ENCODE measurements at regions of chr2 and their contacts with region 1.

Region 1: GRCh38 chr2:164910101-164910899 is 45.0 kb downstream of the SLC38A11 start:
- DNase-seq: no peak
- ATAC-seq: peak; percentile 71
- H3K4me3 Mint-ChIP-seq: peak overlapping the region; percentile 32
- H3K27ac Mint-ChIP-seq: peak overlapping the region; percentile 68
- H3K4me1 Mint-ChIP-seq: peaks cover 39% of the 10 kb centered on the region
- H3K27me3 Mint-ChIP-seq: no peaks in the 10 kb centered on the region
- CTCF ChIP-seq: no peak

Region 2: DNA sequence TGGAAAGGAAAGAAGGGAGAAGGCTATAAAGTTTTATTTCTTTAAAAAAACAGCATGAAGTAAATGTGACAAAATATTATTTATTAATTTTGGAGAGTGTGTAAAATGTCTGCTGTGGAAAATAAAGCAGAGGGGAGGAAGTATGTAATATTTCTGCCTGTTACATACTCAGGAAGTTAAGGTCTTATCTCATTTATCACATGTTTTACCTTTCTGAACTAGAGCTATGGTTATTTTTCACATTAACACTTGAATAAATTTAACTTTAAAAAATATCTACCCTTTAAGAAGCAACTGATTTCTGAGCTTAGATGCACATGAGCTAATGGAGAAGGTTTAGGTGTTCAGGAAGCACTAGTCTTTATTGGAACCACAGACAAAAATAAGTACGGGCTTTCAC is 437.3 kb before region 1 on chr2:
- CTCF ChIA-PET with region 1: no interaction called
- POLR2A ChIA-PET with region 1: no interaction called
- intact Hi-C with region 1: no loop called
- DNase-seq: no peak
- ATAC-seq: no peak
- H3K4me3 Mint-ChIP-seq: no peak overlapping the region
- H3K27ac Mint-ChIP-seq: no peak overlapping the region
- H3K4me1 Mint-ChIP-seq: no peaks in the 10 kb centered on the region
- H3K27me3 Mint-ChIP-seq: no peaks in the 10 kb centered on the region
- CTCF ChIP-seq: no peak

Region 3: DNA sequence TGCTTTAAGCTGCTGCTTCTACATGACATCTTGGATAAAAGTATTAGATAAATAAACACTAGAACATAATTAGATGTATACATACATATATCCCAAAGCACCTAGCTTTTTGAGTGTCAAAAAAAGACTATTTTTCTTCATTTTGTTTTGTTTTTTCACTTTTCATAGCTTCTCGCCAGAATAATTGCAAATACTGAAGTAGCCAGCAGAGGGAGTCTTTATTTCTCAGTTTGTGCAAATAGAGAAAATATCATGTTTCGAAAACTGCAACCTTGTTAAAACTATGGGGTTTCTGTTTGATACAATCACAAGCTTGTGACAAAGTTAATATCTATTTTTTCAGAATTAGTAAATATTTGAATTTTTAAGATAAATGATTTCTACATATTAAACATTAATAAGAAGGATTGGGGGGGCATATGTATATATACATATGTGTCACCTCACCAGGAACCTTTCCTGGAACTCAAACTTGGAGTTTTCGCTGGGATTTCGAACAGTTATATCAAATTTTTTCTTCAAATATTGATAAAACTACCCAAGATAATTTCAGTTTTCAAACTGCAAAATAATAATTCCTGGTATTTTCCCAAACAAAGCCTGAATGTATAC is 350.0 kb before region 1 on chr2:
- CTCF ChIA-PET with region 1: no interaction called
- POLR2A ChIA-PET with region 1: no interaction called
- intact Hi-C with region 1: loop called (anchors 5 kb)
- DNase-seq: no peak
- ATAC-seq: no peak
- H3K4me3 Mint-ChIP-seq: no peak overlapping the region
- H3K27ac Mint-ChIP-seq: no peak overlapping the region
- H3K4me1 Mint-ChIP-seq: peaks cover 6% of the 10 kb centered on the region
- H3K27me3 Mint-ChIP-seq: no peaks in the 10 kb centered on the region
- CTCF ChIP-seq: peak; percentile 81

Region 4: GRCh38 chr2:164697674-164698461 is 212.4 kb before region 1 on chr2:
- CTCF ChIA-PET with region 1: no interaction called
- POLR2A ChIA-PET with region 1: no interaction called
- intact Hi-C with region 1: loop called (anchors 1 kb)
- DNase-seq: no peak
- ATAC-seq: peak; percentile 50
- H3K4me3 Mint-ChIP-seq: no peak overlapping the region
- H3K27ac Mint-ChIP-seq: no peak overlapping the region
- H3K4me1 Mint-ChIP-seq: no peaks in the 10 kb centered on the region
- H3K27me3 Mint-ChIP-seq: no peaks in the 10 kb centered on the region
- CTCF ChIP-seq: no peak

Region 5: GRCh38 chr2:164868563-164869419 is 41.5 kb before region 1 on chr2:
- CTCF ChIA-PET with region 1: no interaction called
- POLR2A ChIA-PET with region 1: no interaction called
- intact Hi-C with region 1: loop called (anchors 2 kb)
- DNase-seq: no peak
- ATAC-seq: no peak
- H3K4me3 Mint-ChIP-seq: no peak overlapping the region
- H3K27ac Mint-ChIP-seq: peak overlapping the region; percentile 32
- H3K4me1 Mint-ChIP-seq: peaks cover 41% of the 10 kb centered on the region
- H3K27me3 Mint-ChIP-seq: no peaks in the 10 kb centered on the region
- CTCF ChIP-seq: no peak

Region 6: DNA sequence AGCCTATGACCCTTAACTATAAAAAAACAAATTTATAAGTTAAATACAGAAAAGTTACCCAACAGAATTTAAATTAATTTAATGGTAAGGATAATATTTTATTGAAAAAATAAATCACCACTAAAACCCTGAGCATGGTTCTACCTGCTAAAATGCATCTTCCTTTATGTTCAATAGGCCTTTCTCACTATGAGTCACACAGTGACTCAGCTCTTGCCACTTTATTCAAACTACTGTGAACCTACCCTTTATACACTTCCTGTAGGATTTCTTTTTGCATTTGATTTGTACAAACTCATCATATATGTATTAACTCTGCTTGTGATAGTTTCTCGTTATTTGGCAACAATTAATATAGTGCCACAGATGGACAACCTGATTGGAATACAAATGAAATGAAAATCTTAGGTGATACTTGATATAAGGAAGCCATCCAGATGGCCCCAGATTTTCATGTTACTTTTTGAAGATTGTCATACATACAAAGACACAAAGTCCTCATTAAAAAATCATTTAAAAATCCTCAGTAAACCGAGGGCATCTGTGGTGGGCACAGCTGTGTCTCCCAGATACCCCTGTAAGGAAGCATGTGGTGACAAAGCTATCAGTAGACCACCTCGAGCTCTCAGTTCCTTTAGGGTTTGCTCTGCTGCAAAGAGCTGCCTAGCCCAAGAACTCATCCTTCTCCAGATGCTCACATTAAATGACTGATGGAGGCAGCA is 13.5 kb before region 1 on chr2:
- CTCF ChIA-PET with region 1: interaction called, 3 read pairs
- POLR2A ChIA-PET with region 1: interaction called, 6 read pairs
- intact Hi-C with region 1: loop called (anchors 1 kb)
- DNase-seq: no peak
- ATAC-seq: peak; percentile 97
- H3K4me3 Mint-ChIP-seq: no peak overlapping the region
- H3K27ac Mint-ChIP-seq: peak overlapping the region; percentile 68
- H3K4me1 Mint-ChIP-seq: peaks cover 19% of the 10 kb centered on the region
- H3K27me3 Mint-ChIP-seq: no peaks in the 10 kb centered on the region
- CTCF ChIP-seq: no peak

Region 7: DNA sequence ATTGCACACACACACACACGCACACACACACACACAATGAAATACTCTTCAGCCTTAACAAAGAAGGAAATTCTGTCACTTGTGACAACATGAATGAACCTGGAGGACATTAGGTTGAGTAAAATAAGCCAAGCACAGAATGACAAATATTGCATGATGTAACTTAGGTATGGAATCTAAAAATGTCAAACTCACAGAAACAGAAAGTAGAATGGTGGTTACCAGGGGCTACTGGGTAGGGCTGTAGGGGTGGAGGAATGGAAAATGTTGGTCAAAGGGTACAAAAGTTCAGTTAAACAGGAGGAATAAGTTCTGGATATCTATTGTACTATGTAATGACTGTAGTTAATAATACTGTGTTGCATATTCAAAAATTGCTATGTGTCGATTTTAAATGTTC is 358.5 kb after region 1 on chr2:
- CTCF ChIA-PET with region 1: no interaction called
- POLR2A ChIA-PET with region 1: no interaction called
- intact Hi-C with region 1: no loop called
- DNase-seq: no peak
- ATAC-seq: no peak
- H3K4me3 Mint-ChIP-seq: no peak overlapping the region
- H3K27ac Mint-ChIP-seq: no peak overlapping the region
- H3K4me1 Mint-ChIP-seq: no peaks in the 10 kb centered on the region
- H3K27me3 Mint-ChIP-seq: peaks cover 2% of the 10 kb centered on the region
- CTCF ChIP-seq: no peak

Region 8: DNA sequence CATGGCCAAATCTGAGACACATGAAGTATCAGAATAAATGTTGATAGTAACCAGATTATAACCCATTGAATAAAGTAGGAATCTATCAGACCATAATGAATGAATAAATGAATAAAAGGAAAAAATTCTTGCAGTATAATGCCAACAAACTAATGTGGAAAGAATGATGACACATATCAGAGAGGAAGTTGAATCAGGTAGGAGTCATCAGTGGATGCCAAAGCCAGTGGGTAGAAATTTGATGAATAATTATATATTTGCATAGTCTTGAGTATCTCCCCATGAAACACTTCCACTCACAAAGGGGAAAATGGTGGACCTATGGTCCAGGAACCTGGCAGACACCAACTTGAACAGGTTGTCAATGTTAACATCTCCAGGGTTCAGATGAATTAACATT is 815.1 kb after region 1 on chr2:
- CTCF ChIA-PET with region 1: no interaction called
- POLR2A ChIA-PET with region 1: no interaction called
- intact Hi-C with region 1: no loop called
- DNase-seq: no peak
- ATAC-seq: no peak
- H3K4me3 Mint-ChIP-seq: no peak overlapping the region
- H3K27ac Mint-ChIP-seq: no peak overlapping the region
- H3K4me1 Mint-ChIP-seq: peaks cover 6% of the 10 kb centered on the region
- H3K27me3 Mint-ChIP-seq: peaks cover 12% of the 10 kb centered on the region
- CTCF ChIP-seq: no peak